Pancreas (tissue), 10 donors: ENCODE measurements at regions of chr6 and their contacts with region 1.

Region 1: DNA sequence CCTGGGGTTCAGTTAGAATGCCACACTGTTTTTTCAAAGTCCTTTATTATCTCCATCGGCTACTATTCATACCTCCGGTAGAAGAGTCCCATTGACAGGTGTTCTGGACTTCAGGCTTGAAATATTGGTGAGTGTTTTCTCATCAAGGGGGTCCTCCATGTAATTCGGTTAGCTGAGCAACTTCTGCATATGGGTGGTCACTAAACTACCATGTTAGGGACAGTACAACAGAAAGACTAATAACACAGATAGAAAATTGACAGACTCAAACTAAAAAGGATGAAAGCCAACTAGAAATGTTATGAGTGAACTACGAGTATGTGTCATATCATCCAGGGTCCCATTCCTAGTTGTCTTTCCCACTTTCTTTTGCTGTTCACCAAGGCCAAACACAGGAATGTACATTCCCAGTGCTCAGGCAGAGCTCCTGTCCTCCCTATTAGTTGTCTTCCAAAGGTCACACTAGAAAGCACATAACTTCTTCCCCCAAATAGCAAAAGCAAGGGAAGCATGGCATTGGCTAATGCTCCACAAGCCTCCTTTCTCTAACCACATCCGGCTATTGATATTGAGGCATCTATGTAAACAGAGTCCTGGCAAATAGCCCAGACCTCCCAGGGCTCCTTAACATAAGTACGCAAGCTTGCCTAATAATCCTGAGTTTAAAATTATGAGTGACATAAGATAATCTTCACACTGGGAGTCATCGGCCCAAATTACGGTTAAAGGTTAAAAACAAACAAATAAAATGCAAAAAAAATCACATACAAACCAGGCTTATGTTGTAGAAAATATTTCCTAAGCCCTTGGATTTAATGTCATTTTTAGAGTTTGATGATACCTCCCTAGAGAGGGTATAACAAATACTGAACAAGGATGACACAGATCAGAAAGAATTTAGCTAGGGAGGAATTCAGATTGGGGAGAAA is 13.2 kb downstream of the CCN2 start:
- DNase-seq: no peak
- ATAC-seq: no peak
- H3K4me3 ChIP-seq: no peak overlapping the region
- H3K27ac ChIP-seq: no peak overlapping the region
- H3K4me1 ChIP-seq: no peaks in the 10 kb centered on the region
- H3K27me3 ChIP-seq: no peaks in the 10 kb centered on the region
- CTCF ChIP-seq: no peak

Region 2: DNA sequence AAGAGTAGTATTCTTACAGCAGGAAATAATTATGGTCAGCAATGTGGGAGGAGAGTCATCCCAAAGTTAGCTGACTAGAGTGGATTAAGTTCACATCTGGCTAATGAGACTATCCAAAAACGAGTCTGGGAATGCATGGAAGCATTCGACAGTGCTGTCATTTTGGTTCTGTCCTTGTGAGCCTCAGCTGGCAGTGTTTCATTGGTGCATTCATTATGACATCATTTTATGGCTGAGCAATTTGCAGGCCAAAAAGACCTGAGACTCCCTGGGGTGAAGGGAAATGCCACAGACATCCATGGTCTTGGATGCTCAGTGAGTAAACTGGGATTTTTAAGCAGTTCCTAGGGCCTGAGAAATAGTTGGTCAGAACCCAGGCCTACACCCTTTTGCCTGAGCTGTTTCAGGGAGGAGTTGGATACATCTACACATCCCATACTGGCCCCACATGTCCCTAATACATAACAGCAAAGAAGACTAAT is 209.6 kb after region 1 on chr6:
- intact Hi-C with region 1: no loop called
- DNase-seq: no peak
- ATAC-seq: peak in 2 of 4 donors; percentile 41 to 54
- H3K4me3 ChIP-seq: no peak overlapping the region
- H3K27ac ChIP-seq: no peak overlapping the region
- H3K4me1 ChIP-seq: no peaks in the 10 kb centered on the region
- H3K27me3 ChIP-seq: no peaks in the 10 kb centered on the region
- CTCF ChIP-seq: no peak

Region 3: DNA sequence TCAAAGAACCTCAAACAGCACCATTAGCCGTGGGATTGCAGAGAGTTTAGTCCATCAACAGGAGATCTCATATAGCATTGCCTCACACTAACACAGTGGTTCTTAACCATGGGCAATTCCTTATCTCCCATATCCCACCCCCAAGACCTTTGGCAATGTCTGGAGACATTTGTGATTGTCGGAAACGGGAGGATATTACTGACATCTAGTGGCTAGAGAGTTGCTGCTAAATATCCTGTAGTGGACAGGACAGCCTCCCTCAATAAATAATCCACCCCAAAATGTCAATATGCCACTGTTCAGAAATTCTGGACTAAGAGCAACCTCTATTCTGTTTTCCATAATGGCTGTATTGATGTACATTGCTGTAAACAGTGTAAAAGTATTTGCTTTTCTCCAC is 223.3 kb after region 1 on chr6:
- intact Hi-C with region 1: loop called in 1 of 3 experiments (anchors 10 kb)
- DNase-seq: no peak
- ATAC-seq: peak; percentile 48 to 79 (median 68)
- H3K4me3 ChIP-seq: no peak overlapping the region
- H3K27ac ChIP-seq: no peak overlapping the region
- H3K4me1 ChIP-seq: no peaks in the 10 kb centered on the region
- H3K27me3 ChIP-seq: no peaks in the 10 kb centered on the region
- CTCF ChIP-seq: peak in 3 of 4 donors; percentile 25 to 38 (median 31)